Activated B cell treated with CpG ODN at 0.5 μM for 24 hours (primary cell): ENCODE measurements at regions of chr9 and their contacts with region 1.

Region 1: GRCh38 chr9:112898872-112899311 is 8.2 kb upstream of the SLC46A2 start:
- DNase-seq: no peak
- ATAC-seq: no peak
- H3K4me3 Mint-ChIP-seq: no peak overlapping the region
- H3K27ac Mint-ChIP-seq: no peak overlapping the region
- H3K4me1 Mint-ChIP-seq: peaks cover 23% of the 10 kb centered on the region
- H3K27me3 Mint-ChIP-seq: peaks cover 4% of the 10 kb centered on the region
- CTCF ChIP-seq: no peak

Region 2: DNA sequence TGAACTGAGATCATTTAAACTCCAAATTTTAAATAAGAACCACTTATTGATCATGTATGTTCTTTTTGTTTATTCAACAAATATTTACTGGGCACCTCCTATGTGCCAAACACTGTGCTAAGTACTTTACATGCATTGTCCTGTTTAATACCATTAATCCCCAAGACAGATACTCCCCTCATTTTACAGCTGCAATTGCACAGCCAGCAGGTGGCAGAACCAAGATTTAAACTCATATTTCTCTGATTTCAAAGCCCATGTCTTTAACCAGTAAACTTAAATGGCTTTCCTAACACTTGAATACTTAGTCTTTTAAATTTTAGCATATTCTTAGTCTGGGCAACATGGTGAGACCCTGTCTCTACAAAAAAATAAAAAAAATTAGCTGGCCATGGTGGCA is 455.7 kb before region 1 on chr9:
- CTCF ChIA-PET with region 1: interaction called, 16 read pairs
- POLR2A ChIA-PET with region 1: no interaction called
- intact Hi-C with region 1: loop called (anchors 2 kb)
- DNase-seq: no peak
- ATAC-seq: no peak
- H3K4me3 Mint-ChIP-seq: no peak overlapping the region
- H3K27ac Mint-ChIP-seq: no peak overlapping the region
- H3K4me1 Mint-ChIP-seq: peaks cover 30% of the 10 kb centered on the region
- H3K27me3 Mint-ChIP-seq: no peaks in the 10 kb centered on the region
- CTCF ChIP-seq: no peak

Region 3: GRCh38 chr9:112839331-112839730 is 59.6 kb before region 1 on chr9:
- CTCF ChIA-PET with region 1: interaction called, 109 read pairs
- POLR2A ChIA-PET with region 1: interaction called, 7 read pairs
- intact Hi-C with region 1: loop called (anchors 1 kb)
- DNase-seq: no peak
- ATAC-seq: peak; percentile 45
- H3K4me3 Mint-ChIP-seq: no peak overlapping the region
- H3K27ac Mint-ChIP-seq: no peak overlapping the region
- H3K4me1 Mint-ChIP-seq: peaks cover 16% of the 10 kb centered on the region
- H3K27me3 Mint-ChIP-seq: no peaks in the 10 kb centered on the region
- CTCF ChIP-seq: no peak

Region 4: GRCh38 chr9:112844771-112845542 is 53.9 kb before region 1 on chr9:
- CTCF ChIA-PET with region 1: interaction called, 109 read pairs
- POLR2A ChIA-PET with region 1: interaction called, 7 read pairs
- intact Hi-C with region 1: loop called (anchors 1 kb)
- DNase-seq: peak; percentile 69
- ATAC-seq: peak; percentile 75
- H3K4me3 Mint-ChIP-seq: peak overlapping the region; percentile 39
- H3K27ac Mint-ChIP-seq: no peak overlapping the region
- H3K4me1 Mint-ChIP-seq: peaks cover 11% of the 10 kb centered on the region
- H3K27me3 Mint-ChIP-seq: no peaks in the 10 kb centered on the region
- CTCF ChIP-seq: peak; percentile 99

Region 5: GRCh38 chr9:112858625-112859147 is 40.2 kb before region 1 on chr9:
- CTCF ChIA-PET with region 1: interaction called, 14 read pairs
- POLR2A ChIA-PET with region 1: interaction called, 3 read pairs
- intact Hi-C with region 1: no loop called
- DNase-seq: no peak
- ATAC-seq: peak; percentile 90
- H3K4me3 Mint-ChIP-seq: peak overlapping the region; percentile 47
- H3K27ac Mint-ChIP-seq: peak overlapping the region; percentile 77
- H3K4me1 Mint-ChIP-seq: peaks cover 62% of the 10 kb centered on the region
- H3K27me3 Mint-ChIP-seq: no peaks in the 10 kb centered on the region
- CTCF ChIP-seq: no peak